HepG2 (cell line): ENCODE measurements at regions of chr10 and their contacts with region 1.

Region 1: DNA sequence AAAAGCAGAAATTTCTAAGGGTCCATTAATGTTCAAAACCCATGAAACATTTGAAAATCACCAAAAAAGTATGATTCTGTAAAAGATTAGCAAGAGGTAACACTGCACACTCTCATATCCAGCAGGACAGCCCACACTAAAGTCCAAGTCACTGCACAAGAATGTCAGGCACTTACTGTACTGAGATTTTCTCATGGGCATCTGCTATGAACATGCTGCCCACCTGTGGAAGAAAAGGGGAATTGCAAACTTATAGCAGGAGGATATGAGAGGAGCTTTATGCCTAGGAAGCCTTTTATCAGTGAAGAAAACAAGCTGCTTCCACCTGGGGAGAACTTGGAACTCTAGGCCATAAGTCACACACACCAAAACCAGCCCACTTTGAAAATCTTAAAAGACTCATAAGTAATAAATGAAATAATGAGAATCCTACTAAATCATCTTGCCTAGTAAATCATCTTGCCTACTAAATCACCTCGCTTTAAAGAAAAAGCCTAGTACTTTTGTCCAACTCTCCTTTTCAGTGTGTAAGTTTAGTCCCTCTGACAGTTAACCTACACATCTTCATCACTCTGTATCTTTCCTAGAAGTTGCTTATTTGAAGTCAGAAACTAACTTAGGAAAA is 46.1 kb downstream of the ARMH3 start:
- DNase-seq: peak; percentile 85
- ATAC-seq: peak; percentile 99
- H3K4me3 ChIP-seq: no peak overlapping the region
- H3K27ac ChIP-seq: no peak overlapping the region
- H3K4me1 ChIP-seq: peaks cover 5% of the 10 kb centered on the region; the same call in 1 of the 2 replicates
- H3K27me3 ChIP-seq: no peaks in the 10 kb centered on the region
- CTCF ChIP-seq: peak; percentile 92
- EP300 ChIP-seq: no peak
- POLR2A ChIP-seq: no peak
- RAD21 ChIP-seq: peak; percentile 81

Region 2: DNA sequence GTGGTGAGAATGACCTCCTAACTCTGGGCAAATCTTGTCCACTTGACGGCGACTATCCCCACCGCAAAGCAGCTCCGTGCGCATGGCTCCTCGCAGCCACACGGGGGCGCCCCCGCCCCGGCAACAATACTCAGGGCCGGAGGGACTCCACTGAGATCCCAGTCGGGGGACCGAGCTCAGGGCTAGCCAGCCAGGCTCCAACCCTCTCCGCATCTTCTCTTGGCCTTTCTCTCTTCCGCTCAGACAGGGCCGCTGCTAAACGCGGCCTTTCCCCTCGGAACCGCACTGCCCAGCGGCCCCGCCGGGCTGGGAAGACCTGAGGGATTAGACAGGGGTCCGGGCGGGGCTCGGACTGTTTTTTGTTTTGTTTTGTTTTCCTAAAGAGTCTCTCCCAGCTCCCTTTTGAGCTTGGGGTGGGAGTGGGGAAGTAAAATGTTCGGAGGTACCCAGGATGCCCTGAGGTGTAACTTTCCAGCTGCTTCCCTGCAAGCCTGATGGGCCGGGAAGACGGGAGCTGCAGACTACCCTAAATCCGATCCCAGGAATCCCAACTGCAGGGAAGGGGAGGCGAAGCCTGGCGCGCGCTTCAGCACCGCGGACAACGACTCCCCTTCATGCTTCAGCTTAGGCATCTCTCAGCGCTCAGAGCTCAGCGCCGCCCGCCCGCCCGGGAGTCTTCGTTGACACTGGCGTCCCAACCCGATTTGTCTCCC is 169.0 kb before region 1 on chr10:
- CTCF ChIA-PET with region 1: interaction called, 10 read pairs
- POLR2A ChIA-PET with region 1: interaction called, 5 read pairs
- in situ Hi-C with region 1: loop called (anchors 5 kb)
- intact Hi-C with region 1: loop called (anchors 1 kb)
- DNase-seq: peak; percentile 62
- ATAC-seq: peak; percentile 87
- H3K4me3 ChIP-seq: peak overlapping the region in 2 of 3 experiments; percentile 46 to 49; a peak in 4 of 6 replicates
- H3K27ac ChIP-seq: no peak overlapping the region
- H3K4me1 ChIP-seq: peaks cover 33% of the 10 kb centered on the region
- H3K27me3 ChIP-seq: no peaks in the 10 kb centered on the region
- CTCF ChIP-seq: peak; percentile 93
- EP300 ChIP-seq: no peak
- POLR2A ChIP-seq: no peak
- RAD21 ChIP-seq: peak; percentile 87

Region 3: GRCh38 chr10:101889256-101890210 is 120.4 kb before region 1 on chr10:
- CTCF ChIA-PET with region 1: interaction called, 30 read pairs
- POLR2A ChIA-PET with region 1: no interaction called
- in situ Hi-C with region 1: no loop called
- intact Hi-C with region 1: loop called (anchors 1 kb)
- DNase-seq: peak; percentile 64
- ATAC-seq: peak; percentile 83
- H3K4me3 ChIP-seq: no peak overlapping the region
- H3K27ac ChIP-seq: no peak overlapping the region
- H3K4me1 ChIP-seq: peaks cover 9% of the 10 kb centered on the region
- H3K27me3 ChIP-seq: no peaks in the 10 kb centered on the region
- CTCF ChIP-seq: peak; percentile 72
- EP300 ChIP-seq: no peak
- POLR2A ChIP-seq: no peak
- RAD21 ChIP-seq: 0 out of 2 replicates have a peak, but pooled peaks have one; percentile 28

Region 4: GRCh38 chr10:102072673-102073527 is 63.0 kb after region 1 on chr10:
- CTCF ChIA-PET with region 1: no interaction called
- POLR2A ChIA-PET with region 1: no interaction called
- in situ Hi-C with region 1: no loop called
- intact Hi-C with region 1: loop called (anchors 1 kb)
- DNase-seq: peak; percentile 51
- ATAC-seq: peak; percentile 89
- H3K4me3 ChIP-seq: no peak overlapping the region
- H3K27ac ChIP-seq: no peak overlapping the region
- H3K4me1 ChIP-seq: no peaks in the 10 kb centered on the region
- H3K27me3 ChIP-seq: no peaks in the 10 kb centered on the region
- CTCF ChIP-seq: peak; percentile 90
- EP300 ChIP-seq: no peak
- POLR2A ChIP-seq: no peak
- RAD21 ChIP-seq: peak; percentile 64